GM12878 (cell line): ENCODE measurements at regions of chr11 and their contacts with region 1.

Region 1: GRCh38 chr11:10653926-10654810 is 39.4 kb downstream of the IRAG1 start:
- DNase-seq: peak; percentile 23
- ATAC-seq: peak; percentile 74
- H3K4me3 ChIP-seq: no peak overlapping the region
- H3K27ac ChIP-seq: no peak overlapping the region
- H3K4me1 ChIP-seq: peaks cover 30% of the 10 kb centered on the region
- H3K27me3 ChIP-seq: no peaks in the 10 kb centered on the region; a peak in 1 of 4 replicates
- CTCF ChIP-seq: peak; percentile 67 to 74 (median 68)
- EP300 ChIP-seq: no peak
- POLR2A ChIP-seq: no peak
- RAD21 ChIP-seq: peak; percentile 89

Region 2: DNA sequence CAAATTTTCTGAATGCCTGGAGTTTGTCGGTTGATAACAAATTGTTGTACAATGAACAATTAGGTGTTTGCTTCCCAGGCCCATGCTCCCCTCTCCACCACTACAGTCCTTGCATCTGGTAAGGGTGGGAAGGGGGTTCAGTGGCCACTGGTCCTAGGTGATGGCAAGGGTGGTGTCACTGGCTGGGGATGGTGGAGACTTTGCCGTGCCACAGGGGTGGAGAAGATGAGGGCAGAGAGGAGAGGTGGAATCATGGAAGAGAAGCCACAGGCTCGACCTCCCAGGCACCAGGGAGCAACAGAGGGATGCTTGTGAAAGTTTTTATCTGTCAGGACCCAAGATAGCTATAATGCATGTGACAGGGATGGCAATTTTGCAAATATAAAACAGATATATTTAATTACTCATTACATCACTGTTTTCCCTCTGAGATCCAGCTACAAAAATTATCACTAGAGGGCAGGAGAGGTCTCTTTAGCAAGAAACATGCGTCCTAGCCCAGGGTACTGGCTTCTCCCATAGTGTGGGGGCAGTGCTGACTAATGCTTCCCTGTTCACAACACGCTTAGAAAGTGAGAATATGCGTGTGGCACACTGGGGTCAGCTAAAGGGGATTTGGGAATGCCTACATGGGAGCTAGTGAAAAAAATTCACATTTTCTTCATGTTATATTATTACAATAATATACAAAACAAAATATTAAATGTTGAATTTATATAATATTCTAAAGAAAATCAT is 248.1 kb before region 1 on chr11:
- CTCF ChIA-PET with region 1: interaction called, 120 read pairs
- POLR2A ChIA-PET with region 1: no interaction called
- RAD21 ChIA-PET with region 1: interaction called, 12 read pairs
- SMC1A ChIA-PET with region 1: interaction called, 26 read pairs
- in situ Hi-C with region 1: loop called (anchors 5 kb)
- intact Hi-C with region 1: loop called (anchors 1 kb)
- DNase-seq: peak; percentile 4
- ATAC-seq: peak; percentile 96
- H3K4me3 ChIP-seq: no peak overlapping the region
- H3K27ac ChIP-seq: no peak overlapping the region
- H3K4me1 ChIP-seq: no peaks in the 10 kb centered on the region
- H3K27me3 ChIP-seq: no peaks in the 10 kb centered on the region; a peak in 1 of 4 replicates
- CTCF ChIP-seq: peak; percentile 65 to 77 (median 68)
- EP300 ChIP-seq: no peak
- POLR2A ChIP-seq: no peak
- RAD21 ChIP-seq: peak; percentile 85

Region 3: GRCh38 chr11:10426475-10426874 is 227.7 kb before region 1 on chr11:
- CTCF ChIA-PET with region 1: interaction called, 17 read pairs
- POLR2A ChIA-PET with region 1: no interaction called
- RAD21 ChIA-PET with region 1: interaction called, 3 read pairs
- SMC1A ChIA-PET with region 1: interaction called, 3 read pairs
- in situ Hi-C with region 1: no loop called
- intact Hi-C with region 1: no loop called
- DNase-seq: no peak
- ATAC-seq: no peak
- H3K4me3 ChIP-seq: no peak overlapping the region
- H3K27ac ChIP-seq: no peak overlapping the region
- H3K4me1 ChIP-seq: no peaks in the 10 kb centered on the region
- H3K27me3 ChIP-seq: no peaks in the 10 kb centered on the region; a peak in 3 of 4 replicates
- CTCF ChIP-seq: no peak
- EP300 ChIP-seq: no peak
- POLR2A ChIP-seq: no peak
- RAD21 ChIP-seq: no peak

Region 4: GRCh38 chr11:10540923-10541560 is 113.1 kb before region 1 on chr11 and contains the start of gene RNF141:
- CTCF ChIA-PET with region 1: interaction called, 33 read pairs
- POLR2A ChIA-PET with region 1: no interaction called
- RAD21 ChIA-PET with region 1: interaction called, 8 read pairs
- SMC1A ChIA-PET with region 1: interaction called, 8 read pairs
- in situ Hi-C with region 1: no loop called
- intact Hi-C with region 1: loop called (anchors 1 kb)
- DNase-seq: peak; percentile 60
- ATAC-seq: peak; percentile 99
- H3K4me3 ChIP-seq: peak within 1 kb of the TSS; percentile 64
- H3K27ac ChIP-seq: peak within 1 kb of the TSS; percentile 22; the same call in 1 of the 2 replicates
- H3K4me1 ChIP-seq: peaks cover 5% of the 10 kb centered on the region
- H3K27me3 ChIP-seq: peaks cover 0 to 5% of the 10 kb centered on the region in 2 experiments; a peak in 1 of 4 replicates
- CTCF ChIP-seq: peak; percentile 80 to 93 (median 91); a peak in 5 of 6 replicates
- EP300 ChIP-seq: no peak
- POLR2A ChIP-seq: peak; percentile 98
- RAD21 ChIP-seq: peak; percentile 47
- polyA plus RNA-seq, gene RNF141: 21.2 to 36.8 TPM

Region 5: GRCh38 chr11:10634407-10634806 is 19.8 kb before region 1 on chr11:
- CTCF ChIA-PET with region 1: interaction called, 21 read pairs
- POLR2A ChIA-PET with region 1: interaction called, 5 read pairs
- RAD21 ChIA-PET with region 1: interaction called, 10 read pairs
- SMC1A ChIA-PET with region 1: interaction called, 3 read pairs
- in situ Hi-C with region 1: no loop called
- intact Hi-C with region 1: no loop called
- DNase-seq: no peak
- ATAC-seq: no peak
- H3K4me3 ChIP-seq: no peak overlapping the region
- H3K27ac ChIP-seq: no peak overlapping the region
- H3K4me1 ChIP-seq: no peaks in the 10 kb centered on the region
- H3K27me3 ChIP-seq: no peaks in the 10 kb centered on the region; a peak in 2 of 4 replicates
- CTCF ChIP-seq: no peak
- EP300 ChIP-seq: no peak
- POLR2A ChIP-seq: no peak
- RAD21 ChIP-seq: no peak

Region 6: GRCh38 chr11:10728789-10729472 is 74.8 kb after region 1 on chr11:
- CTCF ChIA-PET with region 1: interaction called, 11 read pairs
- POLR2A ChIA-PET with region 1: no interaction called
- RAD21 ChIA-PET with region 1: interaction called, 3 read pairs
- SMC1A ChIA-PET with region 1: no interaction called
- in situ Hi-C with region 1: no loop called
- intact Hi-C with region 1: loop called (anchors 2 kb)
- DNase-seq: no peak
- ATAC-seq: no peak
- H3K4me3 ChIP-seq: no peak overlapping the region
- H3K27ac ChIP-seq: no peak overlapping the region
- H3K4me1 ChIP-seq: peaks cover 6% of the 10 kb centered on the region
- H3K27me3 ChIP-seq: no peaks in the 10 kb centered on the region; a peak in 2 of 4 replicates
- CTCF ChIP-seq: no peak
- EP300 ChIP-seq: no peak
- POLR2A ChIP-seq: no peak
- RAD21 ChIP-seq: no peak

Region 7: DNA sequence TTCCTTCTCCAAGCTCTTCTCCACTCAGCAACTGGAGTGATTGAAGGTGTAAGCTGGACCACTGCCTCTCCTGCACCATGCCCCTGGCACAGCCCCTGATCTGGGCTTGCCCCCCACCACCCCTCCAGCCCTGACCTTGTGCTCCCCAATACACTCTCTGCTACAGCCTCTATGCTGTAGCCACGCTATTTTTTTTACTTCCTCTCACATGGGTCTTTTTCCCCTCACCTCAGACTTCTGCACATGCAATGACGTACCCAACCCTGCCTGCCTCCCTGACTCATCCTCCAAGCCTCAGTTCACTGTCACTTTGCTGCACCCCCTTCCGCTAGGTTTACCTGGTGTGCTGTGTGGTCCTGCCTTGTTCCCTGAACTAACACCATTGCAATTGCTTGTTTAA is 689.9 kb after region 1 on chr11:
- CTCF ChIA-PET with region 1: no interaction called
- POLR2A ChIA-PET with region 1: no interaction called
- RAD21 ChIA-PET with region 1: no interaction called
- SMC1A ChIA-PET with region 1: no interaction called
- in situ Hi-C with region 1: no loop called
- intact Hi-C with region 1: no loop called
- DNase-seq: no peak
- ATAC-seq: peak; percentile 60; the same call in 2 of the 3 replicates
- H3K4me3 ChIP-seq: no peak overlapping the region
- H3K27ac ChIP-seq: no peak overlapping the region
- H3K4me1 ChIP-seq: no peaks in the 10 kb centered on the region
- H3K27me3 ChIP-seq: no peaks in the 10 kb centered on the region
- CTCF ChIP-seq: no peak
- EP300 ChIP-seq: no peak
- POLR2A ChIP-seq: no peak
- RAD21 ChIP-seq: no peak